CD4-positive, alpha-beta memory T cell (primary cell): ENCODE measurements at regions of chr12 and their contacts with region 1.

Region 1: GRCh38 chr12:6540181-6540877 is 6.0 kb downstream of the GAPDH start:
- DNase-seq: peak; percentile 30 to 63 (median 33)
- H3K4me3 ChIP-seq: peak overlapping the region in 1 of 2 donors; percentile 22
- H3K4me3 Mint-ChIP-seq: peak overlapping the region in 7 of 8 donors; percentile 43 to 87 (median 80)
- H3K27ac ChIP-seq: peak overlapping the region; percentile 37
- H3K27ac Mint-ChIP-seq: peak overlapping the region; percentile 80 to 93 (median 89)
- H3K4me1 ChIP-seq: peaks cover 70% of the 10 kb centered on the region
- H3K4me1 Mint-ChIP-seq: peaks cover 31 to 61% (median 51%) of the 10 kb centered on the region in 4 donors
- H3K27me3 ChIP-seq: no peaks in the 10 kb centered on the region
- H3K27me3 Mint-ChIP-seq: no peaks in the 10 kb centered on the region

Region 2: DNA sequence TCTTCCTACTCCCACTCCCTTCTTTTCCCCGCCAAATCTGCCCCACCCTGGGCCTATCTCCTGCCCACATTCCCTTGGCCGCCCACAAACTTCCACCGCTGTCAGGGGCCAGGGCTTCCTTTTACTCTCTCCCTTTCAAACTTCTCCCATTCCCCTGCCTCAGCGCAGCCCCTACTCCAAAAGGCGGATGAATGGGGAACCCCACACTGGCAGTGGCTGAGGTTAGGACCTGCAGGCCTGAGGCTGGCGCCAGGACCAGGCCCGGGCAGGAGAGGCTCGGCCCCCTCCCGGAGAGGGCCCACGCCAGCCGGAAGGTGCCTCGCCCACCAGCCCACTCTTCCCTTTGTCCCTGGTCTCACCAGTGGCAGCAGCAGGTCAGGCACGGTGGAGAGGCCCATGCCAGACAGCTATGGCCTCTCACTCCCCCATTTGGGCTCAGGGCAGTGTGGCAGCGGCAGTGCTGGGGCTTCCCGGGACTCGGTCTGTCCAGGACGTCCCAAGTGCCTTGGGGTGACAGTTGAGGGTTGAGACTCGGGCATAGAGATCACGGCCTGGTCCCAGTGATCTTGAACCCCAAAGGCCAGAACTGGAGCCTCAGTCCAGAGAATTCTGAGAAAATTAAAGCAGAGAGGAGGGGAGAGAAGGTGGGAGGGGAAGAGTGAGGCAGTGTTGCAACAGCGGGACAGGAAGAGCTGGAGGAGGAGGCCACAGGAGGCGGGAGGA is 198.8 kb before region 1 on chr12 and contains the start of gene TNFRSF1A:
- CTCF ChIA-PET with region 1: interaction called, 30 read pairs
- POLR2A ChIA-PET with region 1: interaction called, 43 read pairs
- intact Hi-C with region 1: no loop called
- DNase-seq: peak; percentile 44 to 66 (median 56)
- H3K4me3 ChIP-seq: peak within 1 kb of the TSS; percentile 87 to 97
- H3K4me3 Mint-ChIP-seq: no peak within 1 kb of the TSS
- H3K27ac ChIP-seq: peak within 1 kb of the TSS; percentile 92
- H3K27ac Mint-ChIP-seq: peak within 1 kb of the TSS in 2 of 7 donors; percentile 87 to 97
- H3K4me1 ChIP-seq: peaks cover 74% of the 10 kb centered on the region
- H3K4me1 Mint-ChIP-seq: peaks cover 28 to 40% (median 35%) of the 10 kb centered on the region in 4 donors
- H3K27me3 ChIP-seq: no peaks in the 10 kb centered on the region
- H3K27me3 Mint-ChIP-seq: no peaks in the 10 kb centered on the region
- total RNA-seq, gene TNFRSF1A: 80.7 to 86.7 TPM

Region 3: GRCh38 chr12:6423267-6424007 is 116.9 kb before region 1 on chr12:
- CTCF ChIA-PET with region 1: interaction called, 162 read pairs
- POLR2A ChIA-PET with region 1: interaction called, 85 read pairs
- intact Hi-C with region 1: loop called (anchors 1 kb)
- DNase-seq: peak; percentile 83 to 86 (median 85)
- H3K4me3 ChIP-seq: no peak overlapping the region
- H3K4me3 Mint-ChIP-seq: peak overlapping the region in 6 of 8 donors; percentile 12 to 56 (median 31)
- H3K27ac ChIP-seq: peak overlapping the region; percentile 8
- H3K27ac Mint-ChIP-seq: peak overlapping the region; percentile 68 to 90 (median 82)
- H3K4me1 ChIP-seq: peaks cover 42% of the 10 kb centered on the region
- H3K4me1 Mint-ChIP-seq: peaks cover 28 to 38% (median 33%) of the 10 kb centered on the region in 4 donors
- H3K27me3 ChIP-seq: no peaks in the 10 kb centered on the region
- H3K27me3 Mint-ChIP-seq: peaks cover 0 to 6% of the 10 kb centered on the region in 2 donors

Region 4: GRCh38 chr12:6493497-6494257 is 46.7 kb before region 1 on chr12 and contains the start of gene NCAPD2:
- CTCF ChIA-PET with region 1: interaction called, 24 read pairs
- POLR2A ChIA-PET with region 1: interaction called, 97 read pairs
- intact Hi-C with region 1: no loop called
- DNase-seq: peak; percentile 96 to 97 (median 96)
- H3K4me3 ChIP-seq: peak within 1 kb of the TSS; percentile 98 to 99
- H3K4me3 Mint-ChIP-seq: peak within 1 kb of the TSS; percentile 89 to 98 (median 96)
- H3K27ac ChIP-seq: peak within 1 kb of the TSS; percentile 87
- H3K27ac Mint-ChIP-seq: peak within 1 kb of the TSS; percentile 90 to 99 (median 97)
- H3K4me1 ChIP-seq: peaks cover 37% of the 10 kb centered on the region
- H3K4me1 Mint-ChIP-seq: peaks cover 26 to 46% (median 35%) of the 10 kb centered on the region in 4 donors
- H3K27me3 ChIP-seq: no peaks in the 10 kb centered on the region
- H3K27me3 Mint-ChIP-seq: no peaks in the 10 kb centered on the region
- total RNA-seq, gene NCAPD2: 38.1 to 39.8 TPM

Region 5: DNA sequence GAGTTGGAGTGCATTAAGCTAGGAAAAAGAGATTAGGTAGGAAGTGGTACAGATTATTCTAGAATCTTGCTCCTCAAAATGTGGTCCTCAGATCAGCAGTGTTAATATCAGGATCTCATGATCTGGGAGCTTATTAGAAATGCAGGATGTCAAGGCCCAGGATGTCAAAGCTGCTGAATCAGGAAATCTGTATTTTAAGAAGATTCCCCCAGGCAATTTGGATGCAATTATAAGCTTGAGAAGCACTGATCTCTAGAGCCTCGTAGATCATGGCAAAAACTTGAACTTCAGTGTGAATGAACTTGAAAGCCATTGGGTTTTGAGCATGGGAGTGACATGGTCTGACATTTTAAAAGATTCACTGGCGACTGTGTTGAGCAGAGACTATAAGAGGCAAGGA is 39.9 kb before region 1 on chr12:
- CTCF ChIA-PET with region 1: interaction called, 24 read pairs
- POLR2A ChIA-PET with region 1: interaction called, 97 read pairs
- intact Hi-C with region 1: no loop called
- DNase-seq: no peak
- H3K4me3 ChIP-seq: no peak overlapping the region
- H3K4me3 Mint-ChIP-seq: no peak overlapping the region
- H3K27ac ChIP-seq: no peak overlapping the region
- H3K27ac Mint-ChIP-seq: peak overlapping the region in 1 of 7 donors; percentile 13
- H3K4me1 ChIP-seq: peaks cover 15% of the 10 kb centered on the region
- H3K4me1 Mint-ChIP-seq: peaks cover 9 to 13% (median 10%) of the 10 kb centered on the region in 4 donors
- H3K27me3 ChIP-seq: no peaks in the 10 kb centered on the region
- H3K27me3 Mint-ChIP-seq: no peaks in the 10 kb centered on the region

Region 6: DNA sequence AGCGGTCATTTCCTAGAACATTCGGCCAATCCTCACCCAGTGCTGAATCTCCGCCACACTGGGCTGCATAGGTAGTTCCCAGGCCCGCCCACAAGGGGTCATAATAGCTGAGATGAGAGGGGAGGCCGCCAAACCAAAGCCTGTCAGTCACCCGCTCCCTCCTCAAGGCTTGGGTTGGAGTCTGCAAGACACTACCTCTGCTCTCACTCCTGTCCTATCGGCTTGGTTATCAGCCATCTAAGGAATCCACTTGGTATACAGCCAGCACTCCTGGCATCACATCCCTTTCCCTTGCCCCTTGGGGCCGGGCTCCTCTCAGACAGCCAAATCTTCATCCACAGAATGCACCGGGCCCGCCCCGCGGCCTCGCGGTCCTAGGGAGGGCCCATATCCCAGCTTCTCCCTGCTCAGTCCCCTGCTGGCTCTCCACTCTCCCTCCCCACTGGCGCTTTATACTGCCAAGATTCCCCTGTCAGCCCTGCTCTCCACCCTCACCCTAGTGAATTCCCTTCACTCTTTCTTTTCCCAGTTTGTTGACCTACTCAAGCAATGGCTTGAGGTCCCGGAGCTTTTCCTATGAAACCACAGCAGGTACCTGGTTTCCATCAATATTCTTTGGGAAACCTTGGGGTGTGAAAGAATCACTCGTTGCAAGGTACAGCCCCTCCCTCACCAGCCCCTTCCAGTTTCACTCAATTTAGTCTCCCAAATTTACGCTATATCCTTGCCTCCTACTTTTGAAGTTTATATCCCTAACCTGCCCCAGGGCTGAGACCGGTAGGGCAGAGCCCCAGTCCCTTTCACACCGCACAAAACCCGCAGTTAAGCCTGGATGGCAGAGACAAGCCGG is 14.1 kb after region 1 on chr12:
- CTCF ChIA-PET with region 1: interaction called, 88 read pairs
- POLR2A ChIA-PET with region 1: interaction called, 66 read pairs
- intact Hi-C with region 1: loop called (anchors 2 kb)
- DNase-seq: peak; percentile 60 to 79 (median 63)
- H3K4me3 ChIP-seq: peak overlapping the region; percentile 71 to 73
- H3K4me3 Mint-ChIP-seq: peak overlapping the region; percentile 81 to 96 (median 88)
- H3K27ac ChIP-seq: peak overlapping the region; percentile 48
- H3K27ac Mint-ChIP-seq: peak overlapping the region; percentile 14 to 89 (median 70)
- H3K4me1 ChIP-seq: peaks cover 57% of the 10 kb centered on the region
- H3K4me1 Mint-ChIP-seq: peaks cover 28 to 64% (median 45%) of the 10 kb centered on the region in 4 donors
- H3K27me3 ChIP-seq: no peaks in the 10 kb centered on the region
- H3K27me3 Mint-ChIP-seq: no peaks in the 10 kb centered on the region